CD14-positive monocyte (primary cell): ENCODE measurements at regions of chr6 and their contacts with region 1.

Region 1: DNA sequence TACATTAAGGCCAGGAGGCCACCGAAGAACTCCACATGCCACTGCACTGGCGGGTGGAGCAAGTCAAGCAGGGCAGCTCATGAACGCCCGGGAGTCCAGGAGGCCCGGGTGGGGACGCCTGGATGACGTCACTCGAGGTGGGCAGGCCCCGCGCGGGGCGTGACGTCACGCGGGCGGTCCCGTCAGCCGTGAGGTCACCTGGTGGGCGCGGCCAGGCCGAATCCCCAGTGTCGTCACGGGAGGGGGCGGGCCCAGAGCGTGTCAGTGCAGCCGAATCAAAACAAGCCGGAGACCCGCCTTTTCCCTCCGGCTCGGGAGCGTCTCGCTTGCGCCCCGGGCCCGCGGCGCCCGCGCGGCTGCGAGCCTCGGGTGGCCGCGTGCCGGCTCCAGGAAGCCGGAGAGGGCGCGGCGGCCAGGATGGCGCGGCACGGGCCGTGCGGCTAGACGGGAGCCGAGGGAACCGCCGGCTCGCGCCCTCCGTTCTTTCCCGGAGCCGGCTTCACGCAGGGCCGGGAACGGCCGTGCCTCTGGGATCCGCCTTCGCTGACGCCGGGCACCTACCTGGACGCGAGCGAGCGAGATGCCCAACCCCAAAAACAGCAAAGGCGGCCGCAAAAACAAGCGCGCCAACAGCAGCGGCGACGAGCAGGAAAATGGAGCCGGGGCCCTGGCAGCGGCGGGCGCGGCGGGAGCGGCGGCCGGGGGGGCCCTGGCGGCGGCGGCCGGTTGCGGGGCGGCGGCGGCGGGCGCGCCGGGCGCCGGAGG is at the start of gene HECA:
- DNase-seq: peak; percentile 93 to 98 (median 97)
- H3K4me3 ChIP-seq: peak within 1 kb of the TSS; percentile 77 to 94 (median 86)
- H3K4me3 Mint-ChIP-seq: peak within 1 kb of the TSS; percentile 93 to 96
- H3K27ac ChIP-seq: peak within 1 kb of the TSS; percentile 96
- H3K27ac Mint-ChIP-seq: peak within 1 kb of the TSS; percentile 97 to 99 (median 98)
- H3K4me1 ChIP-seq: peaks cover 51 to 70% of the 10 kb centered on the region in 2 donors
- H3K4me1 Mint-ChIP-seq: peaks cover 64% of the 10 kb centered on the region
- H3K27me3 ChIP-seq: no peaks in the 10 kb centered on the region
- H3K27me3 Mint-ChIP-seq: peaks cover 0 to 6% (median 0%) of the 10 kb centered on the region in 3 donors
- CTCF ChIP-seq: no peak
- polyA plus RNA-seq, gene HECA: 2.1 to 28.7 (median 3.3) TPM

Region 2: DNA sequence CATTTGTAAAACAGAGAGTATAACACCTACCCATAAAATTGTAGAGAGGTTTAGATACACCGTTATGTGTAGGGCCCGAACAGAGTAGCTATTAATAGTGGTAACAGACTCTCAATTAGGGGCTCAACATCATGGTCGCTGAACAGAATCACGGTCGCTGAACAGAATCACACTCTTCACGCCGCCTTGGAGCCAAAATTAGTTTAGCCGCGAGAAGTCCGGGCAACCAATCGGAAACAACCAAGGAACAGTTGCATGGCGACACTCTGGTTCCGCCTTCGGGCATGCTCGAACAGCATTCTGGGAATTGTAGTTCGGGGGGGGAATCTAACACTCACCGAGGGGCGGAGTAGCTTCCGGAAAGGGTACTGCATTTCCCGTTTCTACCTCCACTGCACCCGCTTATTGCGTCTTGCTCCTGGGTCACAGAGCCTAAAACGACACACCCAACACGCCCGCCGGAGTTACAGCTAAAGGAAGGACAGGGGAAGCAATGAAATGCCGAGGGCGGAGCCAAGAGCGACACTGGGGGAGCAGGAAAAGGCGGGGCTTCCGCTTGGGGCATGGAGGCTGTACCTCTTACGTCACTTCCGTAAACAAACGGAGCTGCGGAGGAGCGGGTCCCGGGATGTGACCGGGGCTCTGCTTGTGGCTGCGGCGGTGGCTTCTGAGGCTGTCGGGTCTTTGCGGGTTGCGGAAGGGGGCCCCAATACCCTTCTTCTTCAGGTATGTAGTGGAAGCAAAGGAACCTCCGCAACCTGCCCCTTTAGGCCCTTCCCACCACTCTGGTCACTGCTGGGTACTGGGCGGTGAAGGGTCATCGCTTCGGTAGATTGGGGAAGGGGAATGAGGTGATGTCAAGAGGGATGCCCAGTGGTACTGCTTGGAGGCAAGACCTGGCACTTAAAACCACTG is 361.6 kb before region 1 on chr6 and contains the start of gene CCDC28A:
- intact Hi-C with region 1: loop called in 1 of 2 experiments (anchors 10 kb)
- DNase-seq: peak; percentile 93 to 94 (median 94)
- H3K4me3 ChIP-seq: peak within 1 kb of the TSS; percentile 74 to 95 (median 75)
- H3K4me3 Mint-ChIP-seq: peak within 1 kb of the TSS; percentile 98 to 100
- H3K27ac ChIP-seq: peak within 1 kb of the TSS; percentile 93 to 99
- H3K27ac Mint-ChIP-seq: peak within 1 kb of the TSS; percentile 99 to 100 (median 100)
- H3K4me1 ChIP-seq: peaks cover 20 to 24% of the 10 kb centered on the region in 2 donors
- H3K4me1 Mint-ChIP-seq: peaks cover 19% of the 10 kb centered on the region
- H3K27me3 ChIP-seq: no peaks in the 10 kb centered on the region
- H3K27me3 Mint-ChIP-seq: peaks cover 0 to 2% (median 0%) of the 10 kb centered on the region in 3 donors
- CTCF ChIP-seq: no peak
- polyA plus RNA-seq, gene CCDC28A: 16.6 to 53.3 (median 42.6) TPM

Region 3: DNA sequence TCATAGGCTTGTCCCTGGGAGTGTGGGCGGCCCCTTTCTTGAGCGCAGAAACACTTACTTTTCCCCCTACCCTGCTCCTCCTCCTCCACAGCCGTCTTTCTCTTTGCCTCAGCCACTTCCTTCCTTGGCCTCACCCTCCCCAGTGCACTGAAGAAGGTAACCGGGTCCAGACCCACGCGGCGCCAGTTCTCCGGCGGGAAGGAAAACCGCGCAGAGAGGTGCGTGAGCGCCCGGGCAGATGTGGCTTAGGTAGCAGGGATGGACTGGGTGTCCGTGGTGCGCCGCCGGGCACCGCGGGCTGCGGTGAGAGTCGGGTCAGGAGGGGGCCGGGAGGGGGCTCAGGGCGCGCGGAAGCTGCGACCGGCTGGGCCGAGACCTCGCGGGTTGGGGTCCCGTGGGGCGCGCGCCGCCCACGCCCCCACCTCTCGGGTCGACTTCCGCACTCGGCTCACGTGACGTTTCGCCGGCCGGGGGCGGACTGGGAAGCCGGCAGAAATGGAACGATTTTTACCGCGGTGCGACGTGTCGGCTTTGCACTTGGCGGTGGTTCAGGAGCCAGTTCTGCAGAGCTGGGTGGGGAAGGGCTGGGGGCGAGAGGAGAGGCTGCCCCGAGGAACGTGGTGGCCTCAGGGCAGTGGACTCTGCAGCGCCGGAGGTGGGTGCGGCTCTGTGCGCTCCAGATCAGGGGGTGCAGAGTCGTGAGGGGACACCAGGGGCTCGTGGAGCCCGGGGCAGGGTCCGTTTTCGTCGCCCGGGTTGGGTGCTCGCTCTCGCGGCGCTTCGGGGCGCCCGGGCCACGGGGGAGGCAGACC is 106.1 kb before region 1 on chr6 and contains the start of gene ABRACL:
- intact Hi-C with region 1: loop called (anchors 5 to 10 kb)
- DNase-seq: peak; percentile 59 to 76 (median 67)
- H3K4me3 ChIP-seq: peak within 1 kb of the TSS; percentile 53 to 93 (median 84)
- H3K4me3 Mint-ChIP-seq: no peak within 1 kb of the TSS
- H3K27ac ChIP-seq: peak within 1 kb of the TSS; percentile 89 to 98
- H3K27ac Mint-ChIP-seq: peak within 1 kb of the TSS in 6 of 7 donors; percentile 90 to 96 (median 94)
- H3K4me1 ChIP-seq: peaks cover 49 to 58% of the 10 kb centered on the region in 2 donors
- H3K4me1 Mint-ChIP-seq: peaks cover 25% of the 10 kb centered on the region
- H3K27me3 ChIP-seq: no peaks in the 10 kb centered on the region
- H3K27me3 Mint-ChIP-seq: no peaks in the 10 kb centered on the region
- CTCF ChIP-seq: no peak
- polyA plus RNA-seq, gene ABRACL: 39.5 to 174 (median 142) TPM

Region 4: GRCh38 chr6:139173172-139173571 is 38.2 kb after region 1 on chr6:
- intact Hi-C with region 1: loop called in 1 of 2 experiments (anchors 5 kb)
- DNase-seq: peak in 2 of 3 donors; percentile 17 to 50
- H3K4me3 ChIP-seq: no peak overlapping the region
- H3K4me3 Mint-ChIP-seq: no peak overlapping the region
- H3K27ac ChIP-seq: peak overlapping the region in 1 of 2 donors; percentile 32
- H3K27ac Mint-ChIP-seq: peak overlapping the region in 2 of 7 donors; percentile 38 to 49
- H3K4me1 ChIP-seq: peaks cover 15 to 30% of the 10 kb centered on the region in 2 donors
- H3K4me1 Mint-ChIP-seq: peaks cover 27% of the 10 kb centered on the region
- H3K27me3 ChIP-seq: no peaks in the 10 kb centered on the region
- H3K27me3 Mint-ChIP-seq: no peaks in the 10 kb centered on the region
- CTCF ChIP-seq: no peak